Cardiac septum (tissue), 1 donor: ENCODE measurements at regions of chr6 and their contacts with region 1.

Region 1: DNA sequence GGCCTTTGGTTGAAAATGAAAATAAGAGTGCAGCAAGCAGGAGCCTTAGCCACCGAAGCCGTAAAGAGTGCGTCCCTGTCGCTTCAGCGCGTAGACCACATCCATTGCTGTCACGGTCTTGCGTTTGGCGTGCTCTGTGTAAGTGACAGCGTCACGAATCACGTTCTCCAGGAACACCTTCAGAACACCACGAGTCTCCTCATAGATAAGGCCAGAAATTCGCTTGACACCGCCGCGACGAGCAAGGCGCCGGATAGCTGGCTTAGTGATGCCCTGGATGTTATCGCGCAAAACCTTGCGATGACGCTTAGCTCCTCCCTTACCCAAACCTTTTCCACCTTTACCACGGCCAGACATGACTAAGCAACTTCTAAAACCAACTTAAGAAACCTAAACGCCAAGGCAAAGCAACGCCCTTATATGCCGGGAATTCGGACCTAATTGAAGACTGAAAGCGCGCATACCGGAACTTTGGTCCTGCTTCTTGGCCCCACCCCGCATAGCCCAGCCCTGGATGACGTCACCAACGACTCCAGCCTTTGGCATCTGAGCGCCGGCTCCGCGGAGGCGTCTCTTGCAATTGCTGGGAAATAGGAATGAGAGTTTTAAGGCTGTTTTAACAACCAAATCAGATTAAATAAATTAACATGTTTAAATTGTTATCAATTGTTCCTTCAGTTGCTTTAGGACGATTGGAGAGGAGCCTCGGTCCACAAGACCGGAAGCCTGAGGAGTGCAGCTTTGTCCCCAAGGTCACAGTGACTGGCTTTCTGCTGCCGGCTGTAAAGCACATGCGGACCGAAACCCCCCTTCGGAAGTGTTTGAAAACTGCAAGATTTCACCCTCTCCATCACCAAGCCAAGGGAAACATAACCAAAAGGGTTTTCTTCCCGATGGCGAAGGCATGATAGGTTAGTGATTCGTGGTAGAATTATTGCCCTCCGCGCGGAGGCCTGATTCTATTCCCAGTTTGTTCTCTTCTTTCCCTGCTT is 79.6 kb upstream of the BTN3A2 start:
- DNase-seq: peak; percentile 98

Region 2: DNA sequence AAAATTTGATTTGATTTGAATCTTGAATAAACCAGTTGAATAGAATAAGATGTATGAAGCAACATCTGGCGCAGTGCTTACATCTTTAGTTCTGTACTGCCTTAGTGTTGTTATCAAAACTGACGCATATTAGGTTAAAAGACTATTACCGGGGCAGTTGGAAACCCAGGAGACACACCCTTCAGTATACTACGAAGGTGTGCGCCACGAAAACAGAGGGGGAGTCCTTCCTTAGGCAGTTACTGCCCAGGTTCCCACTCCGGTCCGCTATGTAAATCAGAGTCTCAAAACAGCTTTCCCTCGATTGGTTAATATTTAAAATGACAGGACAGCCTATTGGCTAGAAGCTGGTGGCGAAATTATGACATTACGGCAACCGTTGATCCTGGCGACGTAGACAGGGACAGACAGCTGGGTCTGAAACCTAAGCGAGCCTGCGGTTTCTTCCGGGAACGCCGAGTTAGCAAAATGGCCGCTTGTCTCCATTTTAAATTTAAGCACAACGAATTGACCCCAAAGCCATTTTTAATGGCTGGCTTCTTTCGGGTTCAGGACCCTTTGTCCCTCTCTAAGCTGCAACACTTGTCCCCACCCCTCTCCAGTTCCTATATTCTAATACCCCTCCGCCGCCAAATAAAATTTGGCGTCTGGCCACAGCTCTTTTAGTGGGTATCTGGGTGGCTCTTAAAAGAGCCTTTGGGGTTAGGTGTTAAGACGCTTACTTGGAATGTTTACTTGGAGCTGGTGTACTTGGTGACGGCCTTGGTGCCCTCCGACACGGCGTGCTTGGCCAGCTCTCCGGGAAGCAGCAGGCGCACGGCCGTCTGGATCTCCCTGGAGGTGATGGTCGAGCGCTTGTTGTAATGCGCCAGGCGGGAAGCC is 162.4 kb before region 1 on chr6:
- intact Hi-C with region 1: loop called (anchors 10 kb)
- DNase-seq: peak; percentile 94

Region 3: GRCh38 chr6:26216356-26216885 is 69.0 kb before region 1 on chr6:
- intact Hi-C with region 1: loop called (anchors 5 kb)
- DNase-seq: peak; percentile 87

Region 4: GRCh38 chr6:26311385-26312095 is 26.1 kb after region 1 on chr6:
- intact Hi-C with region 1: loop called (anchors 2 kb)
- DNase-seq: no peak

Region 5: DNA sequence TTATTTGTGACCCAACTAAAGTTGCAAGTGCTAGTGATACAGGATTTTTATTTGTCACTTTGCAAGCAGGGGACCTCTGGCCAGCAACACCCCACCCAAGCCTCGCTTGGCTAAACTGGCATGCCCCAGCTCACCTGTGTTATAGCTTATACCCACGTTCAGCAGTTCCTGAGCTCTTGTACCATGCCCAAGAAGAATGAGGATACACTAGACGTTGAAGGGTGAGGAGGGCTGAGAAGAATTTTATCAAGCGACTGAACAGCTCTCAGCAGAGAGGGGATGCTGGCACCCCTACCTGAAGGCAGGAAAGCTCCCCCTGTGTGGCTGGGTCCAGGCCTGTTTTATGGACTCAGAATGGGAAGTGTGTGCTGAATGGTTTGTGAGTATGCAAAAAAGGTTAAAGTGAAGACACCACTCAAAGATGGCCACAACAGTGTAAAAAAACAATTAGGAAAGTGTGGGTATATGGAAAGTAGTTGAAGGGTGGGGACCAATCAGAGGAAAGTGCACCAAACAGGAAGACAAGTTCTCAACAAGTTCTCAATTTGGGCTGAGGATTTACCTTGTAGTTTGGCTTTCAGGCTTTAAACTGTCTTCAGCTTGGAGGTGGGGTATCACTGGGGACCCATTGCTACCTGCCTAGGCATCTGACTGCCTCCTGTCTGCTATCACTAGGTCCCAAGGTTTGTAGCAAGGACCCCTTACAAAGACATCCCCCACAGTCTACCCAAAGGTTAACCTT is 187.3 kb after region 1 on chr6:
- intact Hi-C with region 1: no loop called
- DNase-seq: no peak

Region 6: GRCh38 chr6:26485112-26485780 is 199.8 kb after region 1 on chr6:
- intact Hi-C with region 1: no loop called
- DNase-seq: no peak